Activated naive CD4-positive, alpha-beta T cell treated with anti-CD3 and anti-CD28 coated beads, Interleukin-2, amount 10 ng/mL, durations not matched to agents 7 days and 5 days (primary cell): ENCODE measurements at regions of chr10 and their contacts with region 1.

Region 1: DNA sequence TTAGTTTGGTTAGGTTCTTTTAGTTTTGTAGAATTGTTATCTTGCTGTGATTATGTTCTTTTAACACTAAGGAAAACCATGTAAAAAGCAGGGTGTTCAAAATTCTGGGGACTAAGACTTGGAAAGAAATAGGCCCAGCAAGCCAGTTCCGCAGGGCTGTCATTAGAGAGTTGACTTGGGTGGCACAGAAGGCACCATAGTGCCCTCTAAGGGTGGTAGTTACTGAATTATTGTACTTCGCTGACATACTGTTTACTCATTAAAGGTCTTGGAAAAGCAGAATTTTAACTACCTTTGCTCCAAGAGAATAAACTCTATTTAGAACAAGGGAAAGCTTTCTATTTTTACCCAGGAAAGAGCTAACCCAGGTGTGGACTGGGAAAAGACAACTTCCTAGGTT is 86.5 kb downstream of the OTUD1 start:
- DNase-seq: peak; percentile 36
- H3K4me3 Mint-ChIP-seq: no peak overlapping the region
- H3K27ac Mint-ChIP-seq: no peak overlapping the region
- H3K4me1 Mint-ChIP-seq: no peaks in the 10 kb centered on the region
- H3K27me3 Mint-ChIP-seq: peaks cover 11% of the 10 kb centered on the region

Region 2: GRCh38 chr10:23293145-23293724 is 232.2 kb before region 1 on chr10:
- CTCF ChIA-PET with region 1: interaction called, 24 read pairs
- DNase-seq: peak; percentile 61
- H3K4me3 Mint-ChIP-seq: no peak overlapping the region
- H3K27ac Mint-ChIP-seq: no peak overlapping the region
- H3K4me1 Mint-ChIP-seq: no peaks in the 10 kb centered on the region
- H3K27me3 Mint-ChIP-seq: peaks cover 23% of the 10 kb centered on the region

Region 3: DNA sequence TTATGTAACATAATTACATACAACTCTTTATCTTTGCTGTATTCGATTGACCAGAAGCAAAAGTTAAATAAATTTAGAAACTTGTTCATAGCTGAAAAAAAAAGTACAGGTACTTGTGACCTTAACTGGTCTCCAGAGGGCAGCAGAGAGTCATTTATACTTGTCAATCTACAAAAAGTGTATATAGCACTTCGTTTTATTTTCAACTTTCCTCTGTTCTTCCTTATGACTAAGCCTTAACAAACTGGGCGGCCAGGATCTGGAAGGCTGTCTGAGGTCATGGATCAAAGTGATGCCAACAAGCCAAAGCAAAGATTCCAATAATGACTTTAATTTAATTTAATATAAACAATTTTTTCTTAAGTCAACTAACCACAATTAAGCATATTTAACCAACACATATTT is 210.6 kb before region 1 on chr10:
- CTCF ChIA-PET with region 1: interaction called, 78 read pairs
- DNase-seq: peak; percentile 65
- H3K4me3 Mint-ChIP-seq: no peak overlapping the region
- H3K27ac Mint-ChIP-seq: no peak overlapping the region
- H3K4me1 Mint-ChIP-seq: no peaks in the 10 kb centered on the region
- H3K27me3 Mint-ChIP-seq: peaks cover 10% of the 10 kb centered on the region

Region 4: GRCh38 chr10:23325132-23325531 is 200.3 kb before region 1 on chr10:
- CTCF ChIA-PET with region 1: interaction called, 78 read pairs
- DNase-seq: peak; percentile 38
- H3K4me3 Mint-ChIP-seq: no peak overlapping the region
- H3K27ac Mint-ChIP-seq: no peak overlapping the region
- H3K4me1 Mint-ChIP-seq: peaks cover 2% of the 10 kb centered on the region
- H3K27me3 Mint-ChIP-seq: peaks cover 8% of the 10 kb centered on the region